OCI-LY7 (cell line): ENCODE measurements at regions of chr15 and their contacts with region 1.

Region 1: DNA sequence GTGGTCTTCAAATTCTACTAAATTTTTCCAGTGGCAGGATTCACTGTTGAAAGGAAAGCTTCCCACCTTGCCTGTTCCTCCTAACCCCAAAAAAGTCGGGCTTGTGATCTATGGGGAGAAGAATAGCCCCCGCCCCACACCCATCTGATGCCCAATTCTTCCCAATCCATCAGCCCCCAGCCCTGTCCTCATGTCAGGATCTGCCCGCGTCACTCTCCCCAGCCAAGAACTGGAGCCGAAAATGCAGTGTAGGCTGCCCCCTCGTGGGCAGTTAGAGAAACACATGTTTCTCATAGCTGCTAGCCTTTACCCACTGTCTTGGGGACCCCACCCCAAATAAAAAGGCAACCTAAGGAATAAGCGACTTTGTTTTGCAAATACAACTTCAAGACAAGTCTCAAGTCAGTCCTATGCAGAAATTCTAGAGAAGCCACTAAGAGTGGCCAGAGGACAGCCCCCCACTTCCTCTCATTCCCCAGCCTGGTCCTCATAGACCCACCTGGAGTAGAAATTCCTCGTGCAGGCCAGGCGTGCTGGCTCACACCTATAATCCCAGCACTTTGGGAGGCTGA is 13.0 kb upstream of the CSK start:
- DNase-seq: peak; percentile 68
- H3K4me3 ChIP-seq: no peak overlapping the region
- H3K27ac ChIP-seq: no peak overlapping the region
- H3K4me1 ChIP-seq: peaks cover 40% of the 10 kb centered on the region
- CTCF ChIP-seq: peak; percentile 94

Region 2: DNA sequence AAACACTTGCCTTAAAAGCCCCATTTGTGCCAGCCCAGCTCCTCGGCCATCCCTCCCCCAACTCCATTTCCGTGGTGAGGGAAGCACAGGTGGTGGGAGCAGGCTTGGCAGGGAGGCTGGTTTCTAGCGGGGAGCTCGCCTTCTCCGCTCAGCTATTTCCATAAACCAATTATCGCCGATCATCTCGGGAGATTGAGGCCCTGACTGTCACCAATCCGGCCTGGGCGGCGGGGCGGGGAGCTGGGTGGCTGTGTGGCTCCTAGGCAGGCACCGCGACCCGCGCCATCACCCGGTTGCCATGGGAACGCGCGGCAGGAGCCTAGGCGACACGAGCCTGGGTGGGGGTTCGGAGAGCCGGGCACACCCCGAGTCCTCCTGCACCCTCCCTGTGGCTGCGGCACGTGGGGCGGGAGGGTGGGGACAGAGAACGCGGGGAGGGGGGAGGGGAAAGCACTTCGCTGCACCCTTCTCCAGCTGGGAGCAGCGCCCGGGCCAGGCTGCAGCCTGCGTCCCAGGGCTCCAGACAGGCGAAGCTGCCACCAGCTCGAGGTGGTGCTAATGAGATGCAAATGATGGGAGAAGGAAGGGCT is 523.4 kb before region 1 on chr15:
- CTCF ChIA-PET with region 1: no interaction called
- POLR2A ChIA-PET with region 1: no interaction called
- intact Hi-C with region 1: no loop called
- DNase-seq: no peak
- H3K4me3 ChIP-seq: no peak overlapping the region
- H3K27ac ChIP-seq: no peak overlapping the region
- H3K4me1 ChIP-seq: no peaks in the 10 kb centered on the region
- CTCF ChIP-seq: no peak

Region 3: DNA sequence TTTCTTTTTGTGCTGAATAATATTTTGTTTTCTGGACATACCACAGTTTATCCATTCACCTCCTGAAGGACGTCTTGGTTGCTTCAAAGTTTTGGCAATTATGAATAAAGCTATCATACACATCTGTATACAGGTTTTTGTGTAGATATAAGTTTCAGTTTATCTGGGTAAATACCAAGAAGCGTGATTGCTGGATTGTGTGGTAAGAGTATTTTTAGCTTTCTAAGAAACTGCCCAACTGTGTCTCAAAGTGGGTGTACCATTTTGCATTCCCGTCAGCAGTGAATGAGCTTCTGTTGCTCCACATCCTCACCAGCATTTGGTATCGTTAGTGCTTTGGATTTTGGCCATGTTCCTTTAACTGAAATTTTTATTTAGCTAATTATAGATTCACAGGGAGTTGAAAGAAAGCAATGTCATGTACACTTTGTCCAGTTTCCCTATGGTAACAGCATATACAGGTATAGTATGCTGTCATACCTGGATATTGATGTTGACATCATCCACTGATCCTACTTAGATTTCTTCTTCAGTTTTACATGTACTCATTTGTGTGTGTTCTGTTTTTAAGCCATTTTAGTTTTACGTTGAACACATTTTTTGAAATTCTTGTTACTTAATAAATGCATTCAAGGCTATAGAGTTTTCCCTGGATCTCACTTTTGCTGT is 215.9 kb before region 1 on chr15:
- CTCF ChIA-PET with region 1: no interaction called
- POLR2A ChIA-PET with region 1: no interaction called
- intact Hi-C with region 1: no loop called
- DNase-seq: no peak
- H3K4me3 ChIP-seq: no peak overlapping the region
- H3K27ac ChIP-seq: no peak overlapping the region
- H3K4me1 ChIP-seq: no peaks in the 10 kb centered on the region
- CTCF ChIP-seq: no peak

Region 4: DNA sequence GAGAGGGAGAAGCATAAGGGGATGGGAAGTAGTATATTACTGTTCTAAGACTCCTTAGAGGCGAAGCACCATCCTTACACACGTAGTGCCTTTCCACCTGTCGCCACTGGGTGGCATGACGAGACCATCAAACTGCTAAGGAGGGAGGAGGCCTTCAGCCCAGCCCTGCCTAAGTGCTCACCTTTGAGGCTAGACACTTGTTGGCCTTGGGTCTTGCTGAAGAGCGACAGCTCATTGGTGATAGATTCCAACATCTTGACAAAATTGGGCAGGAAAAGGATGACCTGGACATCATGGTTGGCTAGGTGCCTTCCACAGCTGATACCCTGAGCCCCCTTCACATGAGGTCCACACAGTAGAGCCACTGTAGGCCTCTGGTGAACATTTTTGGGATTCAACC is 133.6 kb before region 1 on chr15:
- CTCF ChIA-PET with region 1: interaction called, 6 read pairs
- POLR2A ChIA-PET with region 1: interaction called, 3 read pairs
- intact Hi-C with region 1: loop called (anchors 1 kb)
- DNase-seq: peak; percentile 81
- H3K4me3 ChIP-seq: no peak overlapping the region
- H3K27ac ChIP-seq: no peak overlapping the region
- H3K4me1 ChIP-seq: peaks cover 5% of the 10 kb centered on the region
- CTCF ChIP-seq: peak; percentile 96

Region 5: GRCh38 chr15:74793135-74794028 is 24.5 kb after region 1 on chr15:
- CTCF ChIA-PET with region 1: interaction called, 14 read pairs
- POLR2A ChIA-PET with region 1: interaction called, 221 read pairs
- intact Hi-C with region 1: loop called (anchors 1 kb)
- DNase-seq: peak; percentile 63
- H3K4me3 ChIP-seq: peak overlapping the region; percentile 97
- H3K27ac ChIP-seq: peak overlapping the region; percentile 99
- H3K4me1 ChIP-seq: peaks cover 98% of the 10 kb centered on the region
- CTCF ChIP-seq: peak; percentile 81

Region 6: DNA sequence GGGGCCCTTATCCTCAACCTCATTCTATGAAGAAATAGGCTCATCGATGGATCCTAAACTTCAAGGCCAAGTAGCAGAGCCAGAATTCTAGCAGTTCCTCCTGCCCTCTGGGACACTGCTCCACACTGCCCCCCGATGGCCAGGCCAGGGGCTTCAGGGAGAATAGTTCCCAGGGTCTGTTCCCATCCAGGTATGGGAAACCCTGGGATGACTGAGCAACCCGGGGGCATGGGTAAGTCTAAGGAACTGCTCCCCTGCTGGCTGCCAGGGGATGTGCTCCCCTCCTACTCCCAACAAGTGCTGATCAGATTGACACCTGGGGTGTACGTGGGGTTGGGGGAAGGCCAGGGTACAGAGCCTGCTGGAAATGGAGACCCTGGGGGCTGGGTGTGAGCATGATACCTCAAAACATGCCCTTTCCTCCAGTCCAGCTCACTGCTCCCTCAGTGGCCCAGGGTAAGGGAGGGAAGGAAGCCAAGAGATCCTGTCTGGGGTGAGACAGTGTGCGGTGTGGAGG is 66.5 kb after region 1 on chr15:
- CTCF ChIA-PET with region 1: interaction called, 6 read pairs
- POLR2A ChIA-PET with region 1: no interaction called
- intact Hi-C with region 1: loop called (anchors 1 kb)
- DNase-seq: peak; percentile 53
- H3K4me3 ChIP-seq: no peak overlapping the region
- H3K27ac ChIP-seq: no peak overlapping the region
- H3K4me1 ChIP-seq: peaks cover 23% of the 10 kb centered on the region
- CTCF ChIP-seq: peak; percentile 93

Region 7: GRCh38 chr15:74901612-74902082 is 132.8 kb after region 1 on chr15:
- CTCF ChIA-PET with region 1: no interaction called
- POLR2A ChIA-PET with region 1: interaction called, 4 read pairs
- intact Hi-C with region 1: loop called (anchors 1 kb)
- DNase-seq: peak; percentile 72
- H3K4me3 ChIP-seq: no peak overlapping the region
- H3K27ac ChIP-seq: peak overlapping the region; percentile 19
- H3K4me1 ChIP-seq: peaks cover 39% of the 10 kb centered on the region
- CTCF ChIP-seq: peak; percentile 99